ENCODE measurements at regions of chr7 and their contacts with region 1.

Region 1: DNA sequence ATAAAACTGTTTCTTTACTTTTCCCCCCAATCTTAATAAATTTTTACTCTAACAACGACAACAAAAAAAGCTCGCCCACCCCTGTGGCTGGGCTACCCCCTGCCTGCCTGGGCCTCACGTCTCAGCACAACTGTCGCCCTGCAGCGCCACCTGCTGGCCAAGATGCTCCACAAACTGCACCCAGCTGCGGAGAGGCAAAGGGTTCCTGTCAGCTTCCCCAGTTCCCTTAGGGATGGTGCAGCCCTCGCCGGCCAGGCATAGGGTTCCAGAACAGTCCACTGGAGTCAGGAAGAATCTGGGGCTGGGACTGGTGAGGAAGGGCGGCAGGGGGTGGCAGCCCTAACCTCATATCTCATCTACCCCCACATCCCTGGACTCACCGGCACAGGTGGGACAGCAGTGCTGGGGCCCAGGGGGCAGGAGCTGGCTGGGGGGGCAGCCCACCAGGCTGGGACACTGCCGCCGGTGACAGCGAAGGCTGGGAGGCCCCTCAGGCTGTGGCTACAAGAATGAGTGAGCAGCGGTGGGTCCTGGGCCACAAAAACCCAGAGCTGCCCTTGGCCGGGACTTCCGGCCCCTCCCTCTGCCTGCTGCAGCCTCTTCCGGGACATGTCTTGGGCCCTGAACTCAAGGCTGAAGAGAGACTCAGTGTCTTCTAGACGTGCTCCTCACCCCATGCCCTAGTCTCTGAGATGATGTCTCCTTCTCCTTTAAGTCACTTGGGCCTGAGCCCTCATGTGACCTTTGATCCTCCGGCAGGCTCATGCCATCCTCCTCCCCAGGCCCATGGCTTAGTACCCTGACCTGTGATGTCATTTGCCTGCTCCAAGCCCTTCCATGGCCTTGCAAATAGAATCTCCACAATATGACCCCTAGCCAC is 21.2 kb downstream of the ATP6V1F start:
- DNase-seq: peak; percentile 89

Region 2: GRCh38 chr7:128791121-128791961 is 92.5 kb before region 1 on chr7:
- intact Hi-C with region 1: loop called (anchors 5 kb)
- DNase-seq: peak; percentile 80

Region 3: DNA sequence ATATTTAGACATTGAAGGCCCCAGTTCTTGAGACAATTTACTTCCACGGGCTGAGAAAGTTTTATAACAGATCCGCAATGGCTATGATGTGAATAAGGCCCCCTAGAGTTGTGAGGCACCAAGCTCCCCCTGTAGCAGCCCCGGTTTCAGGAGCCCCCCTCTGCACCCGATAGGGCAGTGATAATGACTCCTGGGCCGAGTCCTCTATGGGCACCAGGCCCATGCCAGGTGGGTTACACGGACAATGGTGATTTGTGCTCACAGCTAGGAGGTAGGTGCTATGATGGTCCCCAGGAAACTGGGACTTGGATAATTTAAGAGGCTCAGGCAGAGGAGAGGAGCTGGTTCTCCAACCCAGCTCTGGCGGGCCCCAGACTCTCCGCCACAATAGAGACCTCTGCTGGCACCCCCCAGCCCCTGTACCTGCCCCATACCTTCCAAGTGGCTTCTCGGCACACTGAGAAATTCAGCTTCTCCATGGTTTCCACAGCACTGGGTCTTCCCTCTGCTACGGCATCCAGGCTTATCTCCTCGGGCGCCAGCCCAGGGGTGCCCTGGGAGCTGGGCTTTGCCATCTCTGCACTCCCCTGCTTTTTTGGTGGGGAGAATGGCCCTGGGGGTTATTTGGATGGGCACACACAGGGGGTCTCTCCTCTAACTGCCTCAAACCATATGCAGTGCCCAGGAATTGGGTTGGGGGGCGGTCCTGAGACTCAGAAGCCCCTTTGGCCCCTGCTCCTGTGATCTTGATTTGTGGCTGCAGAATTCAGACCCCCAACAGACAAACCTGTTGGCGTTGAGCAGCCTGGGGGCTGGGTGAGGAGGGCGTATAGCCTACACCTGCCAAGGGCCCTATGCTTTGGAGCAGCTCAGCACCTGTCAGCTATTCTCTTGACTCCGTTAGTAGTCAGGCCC is 38.9 kb after region 1 on chr7:
- intact Hi-C with region 1: no loop called
- DNase-seq: peak; percentile 57

Region 4: GRCh38 chr7:128974241-128974934 is 90.5 kb after region 1 on chr7:
- intact Hi-C with region 1: no loop called
- DNase-seq: no peak

Region 5: GRCh38 chr7:129083525-129083924 is 199.7 kb after region 1 on chr7:
- intact Hi-C with region 1: no loop called
- DNase-seq: no peak

Region 6: GRCh38 chr7:129110258-129110981 is 226.6 kb after region 1 on chr7:
- intact Hi-C with region 1: no loop called
- DNase-seq: no peak